ENCODE measurements at regions of chr2 and their contacts with region 1.

Region 1: DNA sequence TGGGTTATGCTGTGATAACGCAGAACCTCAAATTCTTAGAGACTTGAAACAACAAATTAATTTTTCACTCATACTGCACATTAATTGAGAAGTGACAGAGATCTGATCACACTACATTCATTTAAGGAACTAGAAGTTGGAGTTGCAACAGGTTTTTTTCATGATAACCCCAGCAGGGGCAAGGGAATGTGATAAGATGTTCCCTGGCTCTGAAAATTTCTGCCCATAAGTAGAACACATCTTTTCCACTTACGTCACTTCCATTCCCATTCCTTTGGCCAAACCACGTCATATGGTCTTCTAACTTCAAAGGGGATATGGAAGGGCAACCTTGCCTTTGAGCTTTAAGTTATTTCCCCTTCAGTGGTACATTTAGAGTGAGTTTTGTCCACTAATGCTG is 29.7 kb upstream of the PSME4 start:
- DNase-seq: no peak
- CTCF ChIP-seq: no peak

Region 2: GRCh38 chr2:54012538-54013141 is 12.1 kb after region 1 on chr2:
- CTCF ChIA-PET with region 1: interaction called, 11 read pairs
- POLR2A ChIA-PET with region 1: no interaction called
- DNase-seq: no peak
- CTCF ChIP-seq: no peak